Mammary epithelial cell (primary cell): ENCODE measurements at regions of chr17 and their contacts with region 1.

Region 1: DNA sequence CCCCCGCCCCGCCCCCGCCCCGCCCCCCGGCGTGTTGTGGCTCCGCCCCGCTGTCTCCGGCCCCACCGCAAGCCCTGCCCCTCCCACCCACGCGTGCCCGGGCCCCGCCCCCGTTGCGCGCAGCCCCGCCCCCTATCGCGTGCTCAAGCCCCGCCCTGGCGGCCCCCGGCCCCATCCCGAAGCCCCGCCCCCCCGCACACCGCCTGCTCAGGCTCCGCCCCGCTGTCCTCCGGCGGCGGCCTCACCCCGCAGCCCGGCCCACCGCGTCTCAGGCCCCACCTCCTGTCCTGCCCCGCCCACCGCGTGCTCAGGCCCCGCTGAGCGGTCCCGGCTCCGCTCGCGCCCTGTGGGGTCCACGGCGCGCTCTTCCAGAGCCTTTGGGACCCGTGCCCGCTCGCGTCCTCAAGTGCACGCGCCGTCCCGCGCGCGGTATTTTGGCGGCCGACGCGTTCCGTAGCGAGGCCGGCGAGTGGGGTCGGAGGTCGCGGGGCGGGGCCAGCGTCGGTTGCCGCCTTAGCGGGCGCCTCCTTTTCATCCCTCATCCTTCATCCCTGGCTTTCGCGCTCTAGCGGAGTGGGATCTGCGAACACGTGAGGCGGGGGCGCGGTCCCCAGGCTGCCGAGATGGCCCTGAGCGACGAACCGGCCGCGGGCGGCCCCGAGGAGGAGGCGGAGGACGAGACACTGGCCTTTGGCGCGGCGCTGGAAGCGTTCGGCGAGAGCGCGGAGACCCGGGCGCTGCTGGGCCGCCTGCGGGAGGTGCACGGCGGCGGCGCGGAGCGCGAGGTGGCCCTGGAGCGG is at the start of gene TBCD:
- DNase-seq: peak; percentile 89
- H3K4me3 ChIP-seq: peak within 1 kb of the TSS; percentile 96 to 99 (median 97)
- H3K27ac ChIP-seq: peak within 1 kb of the TSS; percentile 66
- H3K4me1 ChIP-seq: peaks cover 11% of the 10 kb centered on the region
- H3K27me3 ChIP-seq: no peaks in the 10 kb centered on the region
- CTCF ChIP-seq: no peak
- total RNA-seq, gene TBCD: 28.7 to 90.9 TPM

Region 2: GRCh38 chr17:82655038-82655479 is 96.7 kb before region 1 on chr17:
- CTCF ChIA-PET with region 1: no interaction called
- dilution Hi-C with region 1: no loop called
- in situ Hi-C with region 1: loop called in 1 of 2 experiments (anchors 10 kb)
- intact Hi-C with region 1: no loop called
- DNase-seq: no peak
- H3K4me3 ChIP-seq: no peak overlapping the region
- H3K27ac ChIP-seq: no peak overlapping the region
- H3K4me1 ChIP-seq: no peaks in the 10 kb centered on the region
- H3K27me3 ChIP-seq: no peaks in the 10 kb centered on the region
- CTCF ChIP-seq: no peak

Region 3: GRCh38 chr17:82698065-82698973 is 53.5 kb before region 1 on chr17 and contains the start of gene RAB40B:
- CTCF ChIA-PET with region 1: no interaction called
- dilution Hi-C with region 1: no loop called
- in situ Hi-C with region 1: no loop called
- intact Hi-C with region 1: loop called (anchors 5 kb)
- DNase-seq: peak; percentile 97
- H3K4me3 ChIP-seq: peak within 1 kb of the TSS; percentile 53 to 79 (median 73)
- H3K27ac ChIP-seq: no peak within 1 kb of the TSS
- H3K4me1 ChIP-seq: peaks cover 31% of the 10 kb centered on the region
- H3K27me3 ChIP-seq: no peaks in the 10 kb centered on the region
- CTCF ChIP-seq: no peak
- total RNA-seq, gene RAB40B: 13.3 to 17.8 TPM